ENCODE measurements at regions of chr19 and their contacts with region 1.

Region 1: DNA sequence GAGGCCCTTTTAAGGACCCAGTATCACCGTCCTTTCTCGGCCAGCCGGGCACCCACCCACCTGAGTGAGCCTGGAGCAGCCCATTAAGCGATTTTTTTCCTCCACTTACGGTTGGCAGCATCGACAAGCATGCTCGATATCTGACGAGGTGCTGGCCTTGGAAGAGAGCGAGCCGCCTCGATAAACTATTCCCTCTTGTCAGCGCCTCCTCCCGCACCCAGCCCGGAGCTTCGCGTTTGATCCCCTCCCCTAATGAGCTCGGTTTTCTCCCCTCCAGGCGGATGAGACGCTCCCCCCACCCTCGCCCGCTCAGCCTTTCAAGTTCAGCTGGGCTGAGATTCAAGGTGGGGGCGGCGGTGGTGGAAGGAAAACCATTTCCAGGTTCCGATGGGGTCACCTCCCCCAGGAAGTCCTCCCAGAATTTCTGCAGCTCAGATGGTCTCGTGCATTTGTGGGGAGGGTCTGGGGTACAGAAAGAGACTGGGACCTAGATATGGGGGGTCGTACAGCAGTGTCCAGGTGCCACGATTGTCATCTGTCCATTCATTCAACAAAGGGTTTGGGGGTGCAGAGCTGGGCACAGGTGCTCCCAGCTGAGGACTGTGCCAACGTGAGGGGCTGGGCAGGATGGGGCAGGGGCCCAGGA is 18.9 kb upstream of the ONECUT3 start:
- DNase-seq: no peak
- H3K4me3 ChIP-seq: no peak overlapping the region
- H3K27ac ChIP-seq: no peak overlapping the region
- H3K4me1 ChIP-seq: no peaks in the 10 kb centered on the region
- H3K27me3 ChIP-seq: peaks cover 97% of the 10 kb centered on the region
- CTCF ChIP-seq: no peak
- EP300 ChIP-seq: no peak
- POLR2A ChIP-seq: no peak

Region 2: DNA sequence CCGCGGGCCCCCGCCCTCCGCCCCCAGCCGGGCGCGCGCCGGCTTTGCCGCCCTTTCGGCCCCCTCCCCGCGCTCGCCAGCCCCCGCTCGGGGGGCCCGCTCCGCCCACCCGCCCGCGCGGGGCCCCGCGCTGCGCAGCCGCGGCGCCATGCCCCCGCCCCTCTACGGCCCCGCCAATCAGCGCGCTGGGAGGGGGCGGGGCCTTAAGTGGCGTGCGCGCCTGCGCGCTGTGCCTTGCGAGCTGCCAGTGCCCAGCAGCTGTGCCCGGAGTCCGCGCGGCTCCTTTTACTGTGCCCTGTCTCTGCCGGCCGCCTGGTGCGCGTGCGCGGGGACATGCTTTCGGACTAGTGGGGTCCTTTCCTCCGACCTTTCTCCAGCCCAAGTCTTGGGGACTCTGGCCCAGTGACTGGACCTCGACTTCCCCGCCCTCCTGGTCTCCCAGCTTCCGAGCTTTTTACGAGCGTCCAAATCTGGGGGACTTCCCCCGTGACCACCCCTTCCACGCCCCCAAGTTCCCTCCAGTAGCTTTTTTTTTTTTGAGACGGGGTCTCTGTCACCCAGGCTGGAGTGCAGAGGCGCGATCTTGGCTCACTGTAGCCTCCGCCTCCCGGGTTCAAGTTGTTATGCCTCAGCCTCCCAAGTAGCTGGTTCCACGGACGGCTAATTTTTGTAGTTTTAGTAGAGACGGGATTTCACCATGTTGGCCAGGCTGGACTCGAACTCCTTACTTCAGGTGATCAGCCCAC is 141.5 kb before region 1 on chr19 and contains the start of gene MBD3:
- in situ Hi-C with region 1: no loop called
- intact Hi-C with region 1: no loop called
- DNase-seq: peak; percentile 94
- H3K4me3 ChIP-seq: peak within 1 kb of the TSS; percentile 87 to 96 (median 92)
- H3K27ac ChIP-seq: peak within 1 kb of the TSS; percentile 97 to 99 (median 98)
- H3K4me1 ChIP-seq: peaks cover 18 to 31% (median 26%) of the 10 kb centered on the region in 4 donors
- H3K27me3 ChIP-seq: no peaks in the 10 kb centered on the region
- CTCF ChIP-seq: peak in 3 of 5 experiments; percentile 14 to 55 (median 54)
- EP300 ChIP-seq: no peak
- POLR2A ChIP-seq: peak; percentile 47
- total RNA-seq, gene MBD3: 61.4 to 121 (median 68.7) TPM

Region 3: DNA sequence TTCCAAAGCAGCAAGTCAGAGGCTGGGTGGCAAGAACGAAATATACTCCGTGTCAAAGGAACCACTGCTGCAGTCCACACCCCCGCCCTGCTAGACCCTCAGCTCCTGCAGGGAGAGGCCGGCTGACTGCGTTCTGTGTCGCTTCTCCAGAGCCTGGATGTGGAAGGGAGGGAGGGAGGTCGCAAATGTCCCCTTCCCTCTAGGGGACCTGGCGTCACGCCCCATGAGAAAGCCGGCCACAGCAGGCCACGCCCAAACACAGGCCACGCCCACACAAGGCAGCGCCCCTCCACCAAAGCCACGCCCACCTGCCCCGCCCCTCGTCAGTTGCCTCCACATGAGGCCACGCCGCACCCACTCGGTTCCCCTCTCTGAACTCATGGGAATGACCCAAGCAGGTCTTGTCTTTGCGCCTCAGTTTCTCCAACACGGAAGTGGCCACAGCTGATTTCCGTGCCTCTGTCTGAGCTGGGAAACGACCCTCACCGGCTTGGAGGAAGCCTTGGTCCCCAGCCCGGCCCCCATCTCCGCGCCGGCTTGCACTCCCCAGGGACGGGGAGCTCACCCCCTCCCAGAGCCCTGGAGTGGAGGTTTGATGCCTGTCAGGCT is 43.6 kb before region 1 on chr19:
- in situ Hi-C with region 1: no loop called
- intact Hi-C with region 1: loop called (anchors 2 kb)
- DNase-seq: peak; percentile 60
- H3K4me3 ChIP-seq: no peak overlapping the region
- H3K27ac ChIP-seq: no peak overlapping the region
- H3K4me1 ChIP-seq: no peaks in the 10 kb centered on the region
- H3K27me3 ChIP-seq: peaks cover 76% of the 10 kb centered on the region
- CTCF ChIP-seq: no peak
- EP300 ChIP-seq: no peak
- POLR2A ChIP-seq: no peak

Region 4: GRCh38 chr19:1794424-1795172 is 60.2 kb after region 1 on chr19:
- in situ Hi-C with region 1: no loop called
- intact Hi-C with region 1: no loop called
- DNase-seq: no peak
- H3K4me3 ChIP-seq: no peak overlapping the region
- H3K27ac ChIP-seq: no peak overlapping the region
- H3K4me1 ChIP-seq: peaks cover 0 to 11% (median 5%) of the 10 kb centered on the region in 4 donors
- H3K27me3 ChIP-seq: peaks cover 26% of the 10 kb centered on the region
- CTCF ChIP-seq: no peak
- EP300 ChIP-seq: no peak
- POLR2A ChIP-seq: no peak

Region 5: GRCh38 chr19:2027361-2027760 is 292.9 kb after region 1 on chr19:
- in situ Hi-C with region 1: no loop called
- intact Hi-C with region 1: no loop called
- DNase-seq: no peak
- H3K4me3 ChIP-seq: no peak overlapping the region
- H3K27ac ChIP-seq: no peak overlapping the region
- H3K4me1 ChIP-seq: peaks cover 10 to 41% (median 19%) of the 10 kb centered on the region in 4 donors
- H3K27me3 ChIP-seq: no peaks in the 10 kb centered on the region
- CTCF ChIP-seq: no peak
- EP300 ChIP-seq: no peak
- POLR2A ChIP-seq: no peak